Heart right ventricle (tissue), 16 donors: ENCODE measurements at regions of chr6 and their contacts with region 1.

Region 1: DNA sequence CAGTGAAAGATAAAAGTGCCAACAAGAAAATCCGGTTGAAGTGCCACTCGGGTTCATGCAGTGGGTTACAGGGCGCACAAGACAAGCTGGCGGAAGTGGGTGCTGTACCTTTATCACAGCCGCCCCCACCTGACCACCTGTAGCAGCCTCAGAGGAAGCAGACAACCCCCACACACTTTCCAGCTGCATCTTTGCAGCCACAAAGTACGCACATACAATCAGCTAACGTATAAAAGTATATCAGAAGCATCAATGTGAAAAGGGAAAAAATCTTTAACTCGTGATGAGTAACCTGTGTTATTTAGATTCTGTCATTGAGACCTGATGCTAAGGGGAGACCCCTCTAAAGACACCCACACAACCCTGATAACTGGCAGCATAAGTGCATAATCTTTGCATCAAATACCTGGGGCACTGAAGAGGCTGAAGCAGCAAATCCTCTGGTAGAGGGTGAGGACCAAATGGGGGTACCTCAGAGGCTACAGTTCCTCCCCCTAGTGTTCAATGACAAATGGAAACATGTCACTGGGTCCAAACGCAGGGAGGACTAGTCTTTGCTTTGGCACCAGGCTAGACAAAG is 22.1 kb downstream of the BACH2 start:
- DNase-seq: no peak
- ATAC-seq: peak in 2 of 8 donors; percentile 38 to 61
- H3K4me3 ChIP-seq: no peak overlapping the region
- H3K27ac ChIP-seq: peak overlapping the region in 1 of 10 donors; percentile 57
- H3K4me1 ChIP-seq: peaks cover 0 to 4% (median 0%) of the 10 kb centered on the region in 9 donors
- H3K27me3 ChIP-seq: no peaks in the 10 kb centered on the region
- CTCF ChIP-seq: no peak

Region 2: GRCh38 chr6:90222724-90223198 is 51.8 kb before region 1 on chr6:
- intact Hi-C with region 1: loop called in 1 of 10 experiments (anchors 10 kb)
- DNase-seq: no peak
- ATAC-seq: no peak
- H3K4me3 ChIP-seq: no peak overlapping the region
- H3K27ac ChIP-seq: no peak overlapping the region
- H3K4me1 ChIP-seq: peaks cover 5 to 33% (median 17%) of the 10 kb centered on the region in 9 donors
- H3K27me3 ChIP-seq: no peaks in the 10 kb centered on the region
- CTCF ChIP-seq: no peak

Region 3: DNA sequence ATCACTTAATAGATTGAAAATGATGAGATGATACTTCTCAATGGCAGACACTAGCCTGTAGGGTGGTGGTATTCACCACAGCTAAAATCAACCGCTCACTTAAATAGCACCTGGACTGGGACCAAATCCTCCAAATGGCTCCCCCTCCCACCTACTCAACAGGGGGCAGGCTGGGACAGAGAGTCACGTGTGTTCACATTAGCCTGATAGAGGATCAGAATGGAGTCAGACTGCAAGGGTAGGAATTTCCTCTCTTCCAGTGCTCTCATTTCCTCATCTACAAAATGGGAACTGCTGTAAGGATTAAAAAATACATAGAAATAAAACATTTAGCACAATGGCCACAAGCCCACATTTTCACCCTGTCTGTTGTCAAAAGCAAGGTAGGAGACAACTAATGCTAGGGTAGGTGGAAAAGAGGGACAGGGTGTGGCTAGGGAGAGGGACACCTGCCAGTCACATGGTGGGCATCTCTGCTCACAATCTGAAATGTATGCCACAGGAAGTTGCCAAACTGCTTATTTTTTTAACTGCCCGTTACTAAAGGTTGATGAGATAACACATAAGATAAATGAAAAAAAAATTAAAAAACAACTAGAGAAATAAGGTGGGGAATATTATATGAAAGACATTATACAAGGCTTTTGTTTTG is 33.2 kb before region 1 on chr6:
- intact Hi-C with region 1: loop called in 1 of 10 experiments (anchors 5 kb)
- DNase-seq: peak in 1 of 2 donors; percentile 30
- ATAC-seq: peak; percentile 34 to 78 (median 62)
- H3K4me3 ChIP-seq: no peak overlapping the region
- H3K27ac ChIP-seq: peak overlapping the region in 1 of 10 donors; percentile 6
- H3K4me1 ChIP-seq: peaks cover 0 to 30% (median 15%) of the 10 kb centered on the region in 9 donors
- H3K27me3 ChIP-seq: no peaks in the 10 kb centered on the region
- CTCF ChIP-seq: no peak

Region 4: DNA sequence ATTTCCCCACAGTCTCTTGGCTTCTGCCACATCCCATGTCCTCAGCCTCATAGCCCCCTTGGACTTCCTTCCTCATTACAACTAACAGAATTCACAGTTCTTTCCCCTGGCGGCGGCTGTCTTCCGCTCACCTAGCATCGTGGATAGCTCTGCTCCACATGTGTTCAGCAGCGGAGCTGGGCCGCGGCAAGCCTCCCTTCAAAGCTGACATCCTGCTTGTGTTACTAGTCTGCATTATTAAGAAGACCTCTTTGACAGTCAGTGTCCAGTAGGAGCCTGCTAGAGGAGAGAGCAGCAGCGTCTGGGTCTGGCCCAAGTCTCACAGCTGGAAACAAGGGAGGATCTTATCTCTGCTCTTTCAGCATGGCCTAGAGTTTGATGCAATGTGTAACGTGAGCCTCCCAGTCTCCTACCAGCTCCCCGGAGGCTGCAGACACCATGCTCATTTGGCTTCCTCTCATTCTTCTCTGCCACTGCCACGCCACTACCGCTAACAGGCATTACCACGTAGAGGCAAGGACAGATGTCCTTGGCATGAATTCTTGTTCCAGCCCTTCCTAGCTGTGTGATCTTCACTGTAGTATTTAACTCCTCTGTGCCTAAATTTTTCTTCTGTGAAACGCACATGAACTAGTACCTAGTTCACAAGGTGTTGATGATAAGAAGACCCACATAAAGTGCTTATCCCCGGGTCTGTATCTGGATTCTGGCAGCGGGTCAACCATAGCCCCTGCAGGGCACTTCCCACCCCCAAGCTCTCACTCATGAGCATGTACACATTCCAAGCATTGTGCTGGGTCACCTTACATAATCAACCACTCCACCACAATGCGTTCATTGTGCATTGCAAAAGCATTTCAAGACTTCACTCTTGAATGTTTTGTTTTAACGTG is 129.2 kb after region 1 on chr6:
- intact Hi-C with region 1: no loop called
- DNase-seq: peak in 1 of 2 donors; percentile 23
- ATAC-seq: peak in 7 of 8 donors; percentile 49 to 89 (median 61)
- H3K4me3 ChIP-seq: no peak overlapping the region
- H3K27ac ChIP-seq: peak overlapping the region in 1 of 10 donors; percentile 6
- H3K4me1 ChIP-seq: peaks cover 0 to 17% (median 8%) of the 10 kb centered on the region in 9 donors
- H3K27me3 ChIP-seq: peaks cover 0 to 14% (median 0%) of the 10 kb centered on the region in 7 donors
- CTCF ChIP-seq: no peak